Breast epithelium (tissue), 4 donors: ENCODE measurements at regions of chr15 and their contacts with region 1.

Region 1: GRCh38 chr15:45529613-45530012 is 7.1 kb upstream of the SLC30A4 start:
- DNase-seq: no peak
- H3K4me3 ChIP-seq: no peak overlapping the region
- H3K27ac ChIP-seq: no peak overlapping the region
- H3K4me1 ChIP-seq: no peaks in the 10 kb centered on the region
- H3K27me3 ChIP-seq: no peaks in the 10 kb centered on the region
- CTCF ChIP-seq: no peak
- POLR2A ChIP-seq: no peak

Region 2: DNA sequence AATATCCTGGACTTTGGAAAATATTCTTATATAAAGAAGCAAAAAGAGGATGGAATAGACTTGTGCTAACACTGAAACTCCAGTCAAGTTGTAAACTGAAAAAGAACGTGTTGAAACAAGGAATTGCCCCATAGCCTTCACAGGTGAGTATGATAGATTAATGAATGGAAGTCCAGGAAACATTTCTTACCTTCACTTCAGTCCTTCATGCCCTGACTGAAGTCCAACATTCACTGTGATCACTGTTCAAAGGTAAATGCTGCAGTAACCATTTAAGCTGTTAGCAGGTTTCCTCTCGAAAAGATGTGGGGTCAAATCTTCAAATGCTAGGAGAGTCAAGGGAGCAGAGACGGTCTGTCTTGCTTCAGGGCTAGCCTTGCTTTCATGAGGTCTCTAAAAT is 53.2 kb before region 1 on chr15:
- intact Hi-C with region 1: loop called (anchors 2 kb)
- DNase-seq: no peak
- H3K4me3 ChIP-seq: no peak overlapping the region
- H3K27ac ChIP-seq: no peak overlapping the region
- H3K4me1 ChIP-seq: no peaks in the 10 kb centered on the region
- H3K27me3 ChIP-seq: no peaks in the 10 kb centered on the region
- CTCF ChIP-seq: no peak
- POLR2A ChIP-seq: no peak

Region 3: DNA sequence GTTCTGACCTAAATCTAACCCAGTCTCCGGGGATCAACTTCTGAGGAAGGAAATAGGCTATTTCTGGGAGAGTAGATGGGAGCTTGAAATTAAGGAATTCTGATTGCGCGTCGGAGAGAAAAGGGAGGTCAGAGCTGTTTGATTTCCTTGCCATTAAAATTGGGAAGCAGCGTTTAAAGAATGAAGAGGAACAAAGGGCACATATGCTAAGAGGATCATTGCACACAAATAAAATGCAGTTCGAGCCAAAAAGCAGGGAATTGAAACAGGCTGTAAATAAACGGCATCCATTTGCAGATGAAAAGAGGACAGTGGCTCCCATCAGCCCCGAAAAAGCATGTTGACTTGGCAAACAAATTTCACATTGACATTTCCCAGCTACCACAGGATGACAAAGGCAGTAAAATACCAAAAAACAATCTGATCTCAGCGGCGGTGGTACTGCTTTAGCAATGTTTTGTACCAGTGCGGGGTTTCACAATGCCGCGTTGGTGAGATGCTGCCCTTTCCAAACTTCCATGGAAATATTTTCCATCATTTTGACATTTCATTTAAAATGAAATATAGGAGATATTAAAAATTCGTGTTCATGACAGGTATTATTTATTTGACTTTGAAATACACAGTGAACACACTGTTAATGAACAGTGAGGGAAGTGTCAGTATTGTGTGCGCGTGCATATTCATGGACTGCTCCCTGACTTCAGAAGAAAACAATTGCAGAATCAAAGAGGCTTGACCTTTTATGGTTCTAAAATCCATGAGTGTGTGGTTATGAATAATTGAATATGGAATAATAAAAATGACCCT is 214.0 kb after region 1 on chr15:
- intact Hi-C with region 1: no loop called
- DNase-seq: no peak
- H3K4me3 ChIP-seq: peak overlapping the region in 1 of 3 donors; percentile 11
- H3K27ac ChIP-seq: no peak overlapping the region
- H3K4me1 ChIP-seq: no peaks in the 10 kb centered on the region
- H3K27me3 ChIP-seq: no peaks in the 10 kb centered on the region
- CTCF ChIP-seq: no peak
- POLR2A ChIP-seq: no peak

Region 4: GRCh38 chr15:46131876-46132275 is 602.3 kb after region 1 on chr15:
- intact Hi-C with region 1: loop called (anchors 10 kb)
- DNase-seq: no peak
- H3K4me3 ChIP-seq: no peak overlapping the region
- H3K27ac ChIP-seq: no peak overlapping the region
- H3K4me1 ChIP-seq: no peaks in the 10 kb centered on the region
- H3K27me3 ChIP-seq: no peaks in the 10 kb centered on the region
- CTCF ChIP-seq: no peak
- POLR2A ChIP-seq: no peak